MCF 10A (cell line): ENCODE measurements at regions of chr5 and their contacts with region 1.

Region 1: GRCh38 chr5:43432473-43433365 is 20.5 kb upstream of the CCL28 start:
- DNase-seq: peak; percentile 99
- H3K4me3 Mint-ChIP-seq: peak overlapping the region; percentile 28
- H3K27ac Mint-ChIP-seq: peak overlapping the region; percentile 53
- H3K4me1 Mint-ChIP-seq: peaks cover 43% of the 10 kb centered on the region
- H3K27me3 Mint-ChIP-seq: no peaks in the 10 kb centered on the region
- CTCF ChIP-seq: no peak

Region 2: GRCh38 chr5:42507451-42508097 is 925.1 kb before region 1 on chr5:
- CTCF ChIA-PET with region 1: no interaction called
- POLR2A ChIA-PET with region 1: no interaction called
- intact Hi-C with region 1: no loop called
- DNase-seq: no peak
- H3K4me3 Mint-ChIP-seq: no peak overlapping the region
- H3K27ac Mint-ChIP-seq: peak overlapping the region; percentile 49
- H3K4me1 Mint-ChIP-seq: peaks cover 19% of the 10 kb centered on the region
- H3K27me3 Mint-ChIP-seq: no peaks in the 10 kb centered on the region
- CTCF ChIP-seq: no peak

Region 3: GRCh38 chr5:43422143-43422542 is 10.6 kb before region 1 on chr5:
- CTCF ChIA-PET with region 1: interaction called, 3 read pairs
- POLR2A ChIA-PET with region 1: interaction called, 17 read pairs
- intact Hi-C with region 1: no loop called
- DNase-seq: peak; percentile 91
- H3K4me3 Mint-ChIP-seq: peak overlapping the region; percentile 34
- H3K27ac Mint-ChIP-seq: peak overlapping the region; percentile 1
- H3K4me1 Mint-ChIP-seq: peaks cover 32% of the 10 kb centered on the region
- H3K27me3 Mint-ChIP-seq: no peaks in the 10 kb centered on the region
- CTCF ChIP-seq: no peak

Region 4: DNA sequence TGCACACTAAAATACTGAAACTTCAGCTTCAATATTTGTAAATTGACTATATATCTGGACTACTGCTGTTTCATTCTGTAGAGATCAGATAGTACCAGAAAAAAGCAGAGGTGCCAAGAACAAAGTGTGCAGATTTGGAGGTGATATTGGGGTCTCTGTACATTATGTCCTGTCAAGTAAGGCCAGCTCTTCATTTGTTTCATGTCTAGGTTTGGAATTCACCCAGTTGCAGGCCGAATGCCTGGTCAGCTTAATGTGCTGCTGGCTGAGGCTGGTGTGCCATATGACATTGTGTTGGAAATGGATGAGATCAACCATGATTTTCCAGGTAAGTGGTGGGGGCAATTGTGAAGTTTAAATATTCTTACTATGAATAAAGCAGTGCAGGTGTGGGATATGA is 267.2 kb after region 1 on chr5:
- CTCF ChIA-PET with region 1: no interaction called
- POLR2A ChIA-PET with region 1: no interaction called
- intact Hi-C with region 1: no loop called
- DNase-seq: no peak
- H3K4me3 Mint-ChIP-seq: no peak overlapping the region
- H3K27ac Mint-ChIP-seq: no peak overlapping the region
- H3K4me1 Mint-ChIP-seq: no peaks in the 10 kb centered on the region
- H3K27me3 Mint-ChIP-seq: no peaks in the 10 kb centered on the region
- CTCF ChIP-seq: no peak